ENCODE measurements at regions of chr3 and their contacts with region 1.

Region 1: DNA sequence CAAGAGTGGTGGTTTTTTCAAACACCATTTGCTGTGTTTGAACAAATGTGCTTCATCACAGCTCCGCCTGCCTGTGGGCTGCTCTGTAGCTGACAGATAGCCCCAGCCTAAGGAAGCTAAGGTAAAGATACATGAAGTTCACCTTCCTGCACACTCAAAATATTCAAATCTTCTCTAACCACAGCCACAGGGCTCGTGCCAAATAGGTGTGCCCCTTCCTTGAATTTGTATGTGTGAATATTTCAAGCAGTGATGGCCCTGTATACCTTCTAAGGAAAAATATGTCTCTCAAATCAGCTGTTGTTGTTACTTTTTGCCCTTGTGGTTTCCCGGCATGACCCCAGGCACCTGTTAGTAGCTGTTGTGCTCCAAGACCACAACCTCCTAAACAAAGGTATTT is 92.8 kb downstream of the CCNL1 start:
- DNase-seq: peak; percentile 12 to 78 (median 46)
- H3K4me3 ChIP-seq: no peak overlapping the region
- H3K4me3 Mint-ChIP-seq: peak overlapping the region in 6 of 7 donors; percentile 49 to 84 (median 72)
- H3K27ac ChIP-seq: no peak overlapping the region
- H3K27ac Mint-ChIP-seq: peak overlapping the region; percentile 43 to 95 (median 94)
- H3K4me1 ChIP-seq: peaks cover 23% of the 10 kb centered on the region
- H3K4me1 Mint-ChIP-seq: peaks cover 51 to 56% (median 53%) of the 10 kb centered on the region in 3 donors
- H3K27me3 ChIP-seq: no peaks in the 10 kb centered on the region
- H3K27me3 Mint-ChIP-seq: peaks cover 0 to 2% of the 10 kb centered on the region in 2 donors

Region 2: GRCh38 chr3:157081681-157082210 is 14.6 kb after region 1 on chr3:
- CTCF ChIA-PET with region 1: interaction called, 24 read pairs
- POLR2A ChIA-PET with region 1: interaction called, 3 read pairs
- DNase-seq: peak; percentile 76 to 92 (median 81)
- H3K4me3 ChIP-seq: no peak overlapping the region
- H3K4me3 Mint-ChIP-seq: peak overlapping the region in 4 of 7 donors; percentile 19 to 70 (median 33)
- H3K27ac ChIP-seq: peak overlapping the region; percentile 25
- H3K27ac Mint-ChIP-seq: peak overlapping the region; percentile 86 to 94 (median 89)
- H3K4me1 ChIP-seq: peaks cover 11% of the 10 kb centered on the region
- H3K4me1 Mint-ChIP-seq: peaks cover 21 to 36% (median 33%) of the 10 kb centered on the region in 3 donors
- H3K27me3 ChIP-seq: no peaks in the 10 kb centered on the region
- H3K27me3 Mint-ChIP-seq: no peaks in the 10 kb centered on the region